ENCODE measurements at regions of chr3 and their contacts with region 1.

Region 1: GRCh38 chr3:120417272-120417911 is 33.4 kb downstream of the FSTL1 start:
- DNase-seq: peak; percentile 96
- ATAC-seq: peak; percentile 91
- H3K4me3 ChIP-seq: peak overlapping the region; percentile 24 to 39
- H3K27ac ChIP-seq: peak overlapping the region; percentile 50
- H3K4me1 ChIP-seq: peaks cover 9 to 23% of the 10 kb centered on the region in 2 experiments
- H3K27me3 ChIP-seq: no peaks in the 10 kb centered on the region
- CTCF ChIP-seq: peak; percentile 78 to 95 (median 88)
- POLR2A ChIP-seq: no peak
- RAD21 ChIP-seq: peak; percentile 97

Region 2: DNA sequence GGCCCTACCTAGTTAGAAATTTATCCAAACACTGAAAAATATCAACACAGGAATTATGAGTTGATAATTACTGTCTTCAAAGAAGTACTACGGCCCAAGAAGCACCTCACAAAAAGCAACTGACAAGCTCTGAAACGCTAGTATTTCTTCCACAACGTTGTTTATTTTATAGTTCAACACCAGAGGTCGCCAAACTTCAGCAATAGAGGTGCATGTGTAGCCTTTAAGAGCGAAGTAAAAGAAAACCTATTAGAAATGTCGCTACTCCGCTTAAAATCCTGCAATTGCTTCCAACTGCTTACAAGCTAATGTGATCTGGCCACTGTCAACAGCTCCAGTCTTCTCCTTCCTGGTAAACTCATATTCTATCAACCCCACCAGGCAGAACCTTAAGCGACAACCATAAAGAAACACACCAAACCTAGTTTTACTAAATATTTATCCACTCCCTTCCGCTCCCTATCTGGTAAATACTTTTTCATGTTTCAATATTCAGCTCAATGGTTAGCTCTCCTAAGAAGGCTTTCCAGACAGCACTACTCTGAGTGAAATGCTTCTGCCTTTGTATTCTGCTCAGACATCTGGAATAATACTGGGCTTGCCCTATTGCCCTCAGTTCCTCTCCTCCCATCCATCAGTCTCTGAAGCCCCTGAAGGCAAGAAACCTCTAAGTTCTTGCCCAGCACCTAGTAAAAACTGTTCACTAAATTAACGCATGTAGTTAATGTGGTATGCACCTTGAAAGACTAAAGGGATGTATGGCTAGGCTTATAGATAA is 525.3 kb before region 1 on chr3:
- CTCF ChIA-PET with region 1: interaction called, 9 read pairs
- POLR2A ChIA-PET with region 1: no interaction called
- RAD21 ChIA-PET with region 1: no interaction called
- intact Hi-C with region 1: loop called (anchors 1 kb)
- DNase-seq: peak; percentile 46
- ATAC-seq: peak; percentile 71
- H3K4me3 ChIP-seq: no peak overlapping the region
- H3K27ac ChIP-seq: no peak overlapping the region
- H3K4me1 ChIP-seq: no peaks in the 10 kb centered on the region
- H3K27me3 ChIP-seq: no peaks in the 10 kb centered on the region
- CTCF ChIP-seq: peak; percentile 58 to 75 (median 73); a peak in 5 of 6 replicates
- POLR2A ChIP-seq: no peak
- RAD21 ChIP-seq: peak; percentile 84

Region 3: DNA sequence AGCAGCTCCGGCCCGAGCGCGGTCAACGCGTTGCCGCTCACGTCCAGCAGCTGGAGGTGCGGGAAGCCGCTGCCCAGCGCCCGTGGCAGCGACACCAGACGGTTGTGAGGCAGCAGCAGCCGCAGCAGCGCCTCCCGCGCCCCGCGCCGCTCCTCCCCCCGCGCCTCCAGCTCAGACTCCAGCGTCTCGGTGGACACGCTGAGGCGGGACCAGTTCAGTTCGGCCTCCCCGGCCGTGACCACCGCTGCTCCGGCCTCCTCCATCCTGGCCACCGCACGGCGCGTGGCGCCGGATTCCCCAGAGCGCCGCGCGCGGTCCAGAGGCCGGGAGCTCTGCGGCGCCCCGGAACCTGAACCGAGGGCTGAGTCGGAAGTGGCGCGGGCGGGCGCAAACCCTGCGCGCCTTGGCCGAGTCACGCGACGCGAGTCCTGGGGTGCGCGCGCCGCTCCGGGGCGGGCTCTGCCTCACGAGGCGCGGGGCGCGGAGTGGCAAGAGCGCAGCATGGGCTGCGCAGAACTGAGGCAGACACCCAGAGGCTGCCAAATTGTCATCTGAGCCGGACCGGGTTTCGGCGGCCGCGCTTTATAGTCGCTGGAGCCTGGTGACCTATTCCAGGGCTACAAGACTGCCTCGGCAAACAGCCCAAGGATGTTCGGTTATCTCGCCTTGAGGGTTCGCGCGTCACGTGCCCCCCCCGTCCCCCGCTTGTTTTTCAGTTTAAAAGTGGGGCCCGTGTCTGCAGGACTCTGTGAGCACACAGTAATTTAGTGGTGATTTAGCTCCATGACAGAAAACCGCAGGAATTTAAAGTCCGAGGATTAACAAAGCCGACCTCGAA is 68.2 kb before region 1 on chr3 and contains the start of gene LRRC58:
- CTCF ChIA-PET with region 1: interaction called, 26 read pairs
- POLR2A ChIA-PET with region 1: interaction called, 8 read pairs
- RAD21 ChIA-PET with region 1: interaction called in 1 of 2 experiments, 9 read pairs
- intact Hi-C with region 1: loop called (anchors 5 kb)
- DNase-seq: peak; percentile 93
- ATAC-seq: peak; percentile 94
- H3K4me3 ChIP-seq: peak within 1 kb of the TSS; percentile 78 to 93
- H3K27ac ChIP-seq: peak within 1 kb of the TSS; percentile 76
- H3K4me1 ChIP-seq: peaks cover 14 to 40% of the 10 kb centered on the region in 2 experiments
- H3K27me3 ChIP-seq: no peaks in the 10 kb centered on the region
- CTCF ChIP-seq: peak in 2 of 3 experiments; percentile 12 to 16; a peak in 1 of 6 replicates
- POLR2A ChIP-seq: peak; percentile 84
- RAD21 ChIP-seq: peak; percentile 30
- total RNA-seq, gene LRRC58: 34.8 TPM

Region 4: GRCh38 chr3:120442975-120443517 is 25.7 kb after region 1 on chr3:
- CTCF ChIA-PET with region 1: interaction called, 22 read pairs
- POLR2A ChIA-PET with region 1: no interaction called
- RAD21 ChIA-PET with region 1: interaction called in 1 of 2 experiments, 3 read pairs
- intact Hi-C with region 1: no loop called
- DNase-seq: no peak
- ATAC-seq: peak; percentile 63; the same call in 1 of the 2 replicates
- H3K4me3 ChIP-seq: no peak overlapping the region
- H3K27ac ChIP-seq: no peak overlapping the region
- H3K4me1 ChIP-seq: no peaks in the 10 kb centered on the region
- H3K27me3 ChIP-seq: no peaks in the 10 kb centered on the region
- CTCF ChIP-seq: peak; percentile 12 to 45 (median 31); a peak in 5 of 6 replicates
- POLR2A ChIP-seq: no peak
- RAD21 ChIP-seq: no peak

Region 5: GRCh38 chr3:120558771-120559241 is 141.4 kb after region 1 on chr3:
- CTCF ChIA-PET with region 1: interaction called, 157 read pairs
- POLR2A ChIA-PET with region 1: interaction called, 12 read pairs
- RAD21 ChIA-PET with region 1: interaction called, 11 to 12 read pairs
- intact Hi-C with region 1: loop called (anchors 1 kb)
- DNase-seq: peak; percentile 76
- ATAC-seq: peak; percentile 62
- H3K4me3 ChIP-seq: peak overlapping the region; percentile 52 to 65
- H3K27ac ChIP-seq: peak overlapping the region; percentile 24; the same call in 1 of the 2 replicates
- H3K4me1 ChIP-seq: peaks cover 15 to 35% of the 10 kb centered on the region in 2 experiments
- H3K27me3 ChIP-seq: no peaks in the 10 kb centered on the region
- CTCF ChIP-seq: peak; percentile 83 to 95 (median 92)
- POLR2A ChIP-seq: no peak
- RAD21 ChIP-seq: peak; percentile 96

Region 6: DNA sequence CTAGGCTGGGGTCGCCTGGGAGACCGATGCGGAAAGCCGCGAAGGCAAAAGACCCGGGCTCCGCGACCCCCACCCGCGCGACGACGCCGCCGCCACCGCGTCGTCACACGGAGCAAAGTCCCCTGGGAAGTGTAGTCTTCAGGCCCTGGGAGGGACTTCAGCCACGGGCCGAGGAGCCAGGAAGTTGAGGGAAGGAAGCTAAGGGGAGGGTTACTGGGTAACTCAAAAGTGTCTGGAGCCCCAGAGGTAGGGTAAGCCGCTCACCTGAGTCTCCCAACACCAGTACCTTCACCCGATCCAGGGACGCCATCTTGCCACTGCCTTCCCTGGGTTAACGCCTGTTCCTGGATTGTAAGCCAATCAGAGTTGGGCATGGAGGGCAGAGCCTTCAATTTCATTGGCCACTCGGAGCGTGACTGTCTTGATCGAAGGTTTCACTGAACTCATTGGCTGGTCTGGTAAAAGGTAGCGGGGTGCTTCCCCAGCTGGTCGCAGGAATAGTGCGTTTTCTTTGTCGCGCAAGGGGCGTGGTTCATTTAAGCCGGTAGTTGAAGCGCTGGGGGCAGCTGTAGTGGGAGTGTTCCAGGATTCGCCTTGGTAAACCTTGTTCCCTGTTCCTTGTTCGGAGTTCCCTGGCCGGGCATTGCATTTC is 324.9 kb after region 1 on chr3 and contains the starts of genes GTF2E1 and RABL3:
- CTCF ChIA-PET with region 1: no interaction called
- POLR2A ChIA-PET with region 1: no interaction called
- RAD21 ChIA-PET with region 1: no interaction called
- intact Hi-C with region 1: no loop called
- DNase-seq: peak; percentile 99
- ATAC-seq: peak; percentile 97
- H3K4me3 ChIP-seq: peak within 1 kb of the TSS; percentile 92 to 100
- H3K27ac ChIP-seq: peak within 1 kb of the TSS; percentile 71
- H3K4me1 ChIP-seq: peaks cover 8 to 16% of the 10 kb centered on the region in 2 experiments
- H3K27me3 ChIP-seq: no peaks in the 10 kb centered on the region
- CTCF ChIP-seq: no peak
- POLR2A ChIP-seq: peak; percentile 57
- RAD21 ChIP-seq: no peak
- total RNA-seq, gene GTF2E1: 21.5 TPM
- total RNA-seq, gene RABL3: 23.8 TPM

Region 7: GRCh38 chr3:120795017-120795648 is 377.7 kb after region 1 on chr3:
- CTCF ChIA-PET with region 1: interaction called, 5 read pairs
- POLR2A ChIA-PET with region 1: no interaction called
- RAD21 ChIA-PET with region 1: interaction called in 1 of 2 experiments, 4 read pairs
- intact Hi-C with region 1: loop called (anchors 2 kb)
- DNase-seq: peak; percentile 61
- ATAC-seq: peak; percentile 97
- H3K4me3 ChIP-seq: no peak overlapping the region
- H3K27ac ChIP-seq: no peak overlapping the region
- H3K4me1 ChIP-seq: peaks cover 0 to 27% of the 10 kb centered on the region in 2 experiments; a peak in 2 of 4 replicates
- H3K27me3 ChIP-seq: no peaks in the 10 kb centered on the region
- CTCF ChIP-seq: peak; percentile 81 to 93 (median 89)
- POLR2A ChIP-seq: no peak
- RAD21 ChIP-seq: peak; percentile 93

Measured in HCT116 (cell line).